ENCODE measurements at regions of chr1 and their contacts with region 1.

Region 1: DNA sequence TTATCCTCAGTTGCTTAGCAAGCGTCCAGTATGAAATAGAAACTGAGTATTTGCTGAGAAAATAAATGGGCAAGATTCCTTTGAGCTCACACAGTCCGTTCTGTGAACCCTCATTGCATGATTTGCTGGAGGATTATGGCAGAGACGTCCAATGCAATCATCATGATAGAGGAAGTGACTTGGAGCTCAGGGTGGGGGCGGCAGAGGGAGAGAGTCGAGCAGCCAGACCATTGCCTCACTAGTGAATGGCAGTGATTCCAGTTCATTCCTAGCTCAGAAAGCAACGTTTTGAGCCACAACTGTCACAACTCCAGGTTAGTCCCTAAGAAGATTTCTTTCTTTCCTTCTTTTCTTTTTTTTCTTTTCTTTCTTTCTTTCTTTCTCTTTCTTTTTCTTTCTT is 27.5 kb upstream of the COL9A2 start:
- DNase-seq: no peak
- H3K4me3 ChIP-seq: no peak overlapping the region
- H3K27ac ChIP-seq: no peak overlapping the region
- H3K4me1 ChIP-seq: no peaks in the 10 kb centered on the region
- H3K27me3 ChIP-seq: no peaks in the 10 kb centered on the region
- CTCF ChIP-seq: no peak

Region 2: GRCh38 chr1:40079774-40080400 is 264.7 kb before region 1 on chr1:
- intact Hi-C with region 1: loop called (anchors 5 kb)
- DNase-seq: no peak
- H3K4me3 ChIP-seq: no peak overlapping the region
- H3K27ac ChIP-seq: no peak overlapping the region
- H3K4me1 ChIP-seq: no peaks in the 10 kb centered on the region
- H3K27me3 ChIP-seq: no peaks in the 10 kb centered on the region
- CTCF ChIP-seq: no peak

Region 3: GRCh38 chr1:40153073-40153770 is 191.4 kb before region 1 on chr1:
- intact Hi-C with region 1: loop called (anchors 2 kb)
- DNase-seq: peak; percentile 31
- H3K4me3 ChIP-seq: no peak overlapping the region
- H3K27ac ChIP-seq: no peak overlapping the region
- H3K4me1 ChIP-seq: no peaks in the 10 kb centered on the region
- H3K27me3 ChIP-seq: no peaks in the 10 kb centered on the region
- CTCF ChIP-seq: peak; percentile 52

Region 4: GRCh38 chr1:40404670-40405462 is 60.3 kb after region 1 on chr1:
- intact Hi-C with region 1: loop called (anchors 5 kb)
- DNase-seq: no peak
- H3K4me3 ChIP-seq: no peak overlapping the region
- H3K27ac ChIP-seq: no peak overlapping the region
- H3K4me1 ChIP-seq: no peaks in the 10 kb centered on the region
- H3K27me3 ChIP-seq: no peaks in the 10 kb centered on the region
- CTCF ChIP-seq: peak; percentile 73

Region 5: GRCh38 chr1:40849801-40850592 is 505.4 kb after region 1 on chr1:
- intact Hi-C with region 1: no loop called
- DNase-seq: peak; percentile 71
- H3K4me3 ChIP-seq: no peak overlapping the region
- H3K27ac ChIP-seq: no peak overlapping the region
- H3K4me1 ChIP-seq: no peaks in the 10 kb centered on the region
- H3K27me3 ChIP-seq: no peaks in the 10 kb centered on the region
- CTCF ChIP-seq: peak; percentile 89